ENCODE measurements at regions of chr20 and their contacts with region 1.

Region 1: GRCh38 chr20:3716195-3716834 is 3.9 kb upstream of the SIGLEC1 start:
- DNase-seq: no peak

Region 2: GRCh38 chr20:3092611-3093379 is 623.5 kb before region 1 on chr20:
- intact Hi-C with region 1: no loop called
- DNase-seq: no peak

Region 3: DNA sequence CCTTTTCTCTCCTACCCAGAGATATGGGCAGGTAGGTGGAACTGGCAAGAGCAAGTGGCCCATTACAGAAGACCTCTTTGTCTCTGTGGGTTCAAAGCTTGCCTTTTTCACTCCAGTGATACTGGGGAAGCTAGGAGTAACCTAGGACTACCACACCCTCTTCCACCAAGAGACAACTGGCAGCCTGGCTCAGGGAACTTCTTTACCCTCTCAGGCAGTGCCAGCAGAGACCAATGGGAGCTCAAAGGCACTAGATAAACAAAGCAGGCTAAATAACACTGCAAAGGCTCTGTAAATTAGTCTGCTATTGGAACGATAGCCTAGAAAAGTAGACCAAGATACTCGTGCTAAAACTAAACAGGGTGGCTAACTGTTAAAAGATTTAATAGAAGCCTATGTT is 213.4 kb before region 1 on chr20:
- intact Hi-C with region 1: no loop called
- DNase-seq: no peak

Region 4: DNA sequence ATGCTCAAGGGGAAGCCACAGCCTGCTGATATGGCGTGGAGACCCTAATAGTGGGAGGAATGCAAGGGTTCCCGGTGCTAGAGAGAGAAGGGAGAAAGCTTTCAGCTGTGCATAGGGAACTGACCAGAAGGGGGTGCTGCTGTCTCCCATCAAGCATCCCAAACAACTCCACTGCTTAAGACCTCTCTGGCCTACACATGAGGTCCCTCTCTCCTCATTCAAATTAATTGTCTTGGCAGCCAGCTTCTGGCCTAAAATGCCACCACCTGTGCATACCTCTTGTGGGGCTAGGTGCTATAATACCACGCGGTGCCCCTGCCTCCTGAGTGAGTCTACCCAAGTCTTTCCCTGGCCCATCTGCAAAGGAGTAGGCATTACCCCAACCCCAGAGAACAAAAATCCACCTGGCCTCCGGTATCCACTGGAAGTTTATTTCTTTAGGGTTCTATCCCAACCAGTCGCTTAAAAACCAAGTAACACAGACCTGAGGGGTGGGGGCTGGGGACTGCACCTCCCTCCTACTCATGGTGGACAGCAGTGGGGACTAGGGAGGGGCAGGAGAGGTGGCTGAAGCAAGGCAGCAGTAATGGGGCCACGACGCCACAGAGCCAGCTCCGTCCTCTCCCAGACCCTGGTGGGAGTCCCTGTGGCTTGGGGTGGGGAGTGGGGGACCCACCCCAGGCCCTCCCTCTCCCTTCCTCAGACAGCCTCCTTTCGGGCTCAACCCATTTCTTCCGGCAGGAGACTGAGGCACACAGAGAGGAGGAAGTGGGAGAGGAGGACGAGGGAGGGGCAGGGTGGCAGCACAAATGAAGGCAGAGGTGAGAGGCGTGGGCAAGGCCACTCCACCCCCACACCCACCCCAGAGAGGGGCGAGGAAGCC is 37.0 kb after region 1 on chr20:
- intact Hi-C with region 1: loop called (anchors 5 kb)
- DNase-seq: no peak

Region 5: GRCh38 chr20:3781153-3781910 is 65.0 kb after region 1 on chr20 and contains the start of gene SPEF1:
- intact Hi-C with region 1: loop called (anchors 5 kb)
- DNase-seq: no peak
- total RNA-seq, gene SPEF1: not detected

Measured in cardiac septum (tissue), 1 donor.